Activated T-helper 1 cell treated with anti-CD3 and anti-CD28 coated beads, Interleukin-12 subunit alpha, Interleukin-12 subunit beta, Interleukin-2, Interleukin-4 antibody, amounts not matched to agents 30 ng/mL and 10 ng/mL and 1 ng/mL, durations not matched to agents 14 hours and 24 hours and 36 hours (primary cell): ENCODE measurements at regions of chr1 and their contacts with region 1.

Region 1: DNA sequence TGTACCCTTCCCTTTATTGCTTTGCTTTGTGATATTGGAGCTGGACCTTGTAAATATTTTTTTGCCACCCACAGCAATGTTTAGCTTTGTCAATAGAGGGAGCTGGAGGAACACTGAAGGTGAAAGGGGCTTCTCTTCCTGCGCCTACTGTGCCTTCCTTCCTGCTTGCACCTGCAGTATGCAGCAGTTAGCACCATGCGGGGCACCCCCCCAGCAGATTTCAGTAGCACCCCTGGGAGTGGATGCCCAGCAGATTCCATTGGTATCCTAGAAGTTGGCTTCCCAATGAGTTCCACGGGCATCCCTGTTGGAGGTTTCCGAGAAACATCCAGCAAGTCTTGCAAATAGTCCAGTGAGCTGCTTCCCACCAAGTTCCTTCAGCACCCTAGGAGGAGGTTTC is 25.6 kb downstream of the S100A10 start:
- DNase-seq: peak; percentile 45
- H3K4me3 Mint-ChIP-seq: no peak overlapping the region
- H3K27ac Mint-ChIP-seq: no peak overlapping the region
- H3K4me1 Mint-ChIP-seq: peaks cover 35% of the 10 kb centered on the region
- H3K27me3 Mint-ChIP-seq: peaks cover 9% of the 10 kb centered on the region

Region 2: DNA sequence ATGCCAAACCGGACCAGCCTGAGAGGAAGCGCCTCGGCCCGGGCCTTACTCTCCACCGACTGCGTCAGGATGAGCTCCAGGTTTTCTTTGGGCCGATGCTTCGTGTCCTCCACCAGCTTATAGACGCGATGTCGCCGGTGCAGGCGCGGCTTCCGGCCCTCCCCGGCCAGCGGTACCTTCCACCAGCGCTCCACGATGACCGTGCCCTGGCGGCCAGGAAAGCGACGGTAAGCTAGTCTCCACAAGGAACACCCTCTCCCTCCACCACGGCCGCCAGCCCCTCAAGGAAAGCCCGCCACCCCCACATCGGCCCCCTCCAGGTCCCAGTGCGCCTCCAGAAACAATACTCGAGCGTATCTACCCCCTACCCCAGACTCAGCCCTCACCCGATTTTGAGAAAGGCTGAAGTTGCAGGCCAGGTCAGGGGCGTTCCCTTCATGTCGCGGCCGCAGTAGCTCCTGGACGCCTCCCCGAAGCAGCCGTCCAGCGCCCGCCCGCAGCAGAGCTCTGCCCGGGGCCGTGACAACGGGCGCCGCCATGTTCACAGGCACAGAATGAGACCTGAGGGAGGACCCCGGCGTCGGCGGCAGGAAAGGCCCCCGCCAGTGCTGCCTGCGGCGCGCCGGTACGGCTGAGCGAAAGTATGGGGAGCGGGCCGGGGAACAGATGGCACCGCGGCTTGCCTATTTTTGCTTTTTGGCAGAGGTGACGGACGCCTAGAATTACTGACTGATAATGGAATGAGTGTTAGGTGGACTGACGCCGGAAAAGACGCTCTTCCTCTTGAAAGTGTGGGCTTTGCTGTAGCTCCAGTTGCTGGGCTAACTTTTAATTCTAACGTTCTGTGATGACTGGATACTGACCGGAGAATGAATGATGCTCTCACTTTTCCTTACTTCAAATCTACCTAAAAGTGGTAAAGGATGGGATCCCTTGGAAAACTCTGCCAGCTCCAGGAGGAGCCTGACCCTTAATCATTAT is 204.8 kb before region 1 on chr1 and contains the start of gene MRPL9:
- intact Hi-C with region 1: no loop called
- DNase-seq: peak; percentile 84
- H3K4me3 Mint-ChIP-seq: peak within 1 kb of the TSS; percentile 89
- H3K27ac Mint-ChIP-seq: peak within 1 kb of the TSS; percentile 96
- H3K4me1 Mint-ChIP-seq: peaks cover 35% of the 10 kb centered on the region
- H3K27me3 Mint-ChIP-seq: no peaks in the 10 kb centered on the region
- total RNA-seq, gene MRPL9: 136 and 141 TPM in 2 replicates

Region 3: DNA sequence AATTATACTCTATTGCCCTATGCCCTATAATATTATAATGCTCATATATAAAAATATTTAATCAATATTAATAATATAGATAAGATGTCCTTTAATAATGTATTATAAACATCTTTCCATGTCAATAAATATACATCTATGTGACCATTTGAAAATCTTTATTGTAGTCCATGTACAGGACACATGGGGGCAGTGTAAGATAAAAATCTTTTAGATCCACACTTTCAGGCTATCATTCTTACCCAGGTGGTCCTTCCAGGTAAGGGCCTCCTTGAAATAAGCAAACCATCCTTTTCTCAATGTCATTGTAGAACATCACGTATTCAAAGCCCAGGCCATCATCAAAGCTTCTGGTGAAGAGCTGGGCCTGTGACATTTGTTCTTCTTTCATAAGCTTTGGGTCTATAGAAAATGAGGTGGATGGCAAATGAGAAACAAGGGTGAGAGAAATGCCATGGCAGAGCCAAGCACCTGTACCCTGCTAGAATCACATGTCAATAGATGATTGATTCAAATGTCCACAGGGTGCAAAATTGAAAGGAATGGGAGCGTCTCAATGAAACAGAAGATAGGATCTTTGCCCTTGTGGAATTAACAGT is 79.0 kb before region 1 on chr1:
- intact Hi-C with region 1: loop called (anchors 1 kb)
- DNase-seq: no peak
- H3K4me3 Mint-ChIP-seq: no peak overlapping the region
- H3K27ac Mint-ChIP-seq: no peak overlapping the region
- H3K4me1 Mint-ChIP-seq: peaks cover 30% of the 10 kb centered on the region
- H3K27me3 Mint-ChIP-seq: no peaks in the 10 kb centered on the region

Region 4: GRCh38 chr1:151945725-151946364 is 22.2 kb before region 1 on chr1:
- intact Hi-C with region 1: loop called (anchors 1 kb)
- DNase-seq: peak; percentile 77
- H3K4me3 Mint-ChIP-seq: peak overlapping the region; percentile 58
- H3K27ac Mint-ChIP-seq: peak overlapping the region; percentile 88
- H3K4me1 Mint-ChIP-seq: peaks cover 50% of the 10 kb centered on the region
- H3K27me3 Mint-ChIP-seq: peaks cover 1% of the 10 kb centered on the region

Region 5: GRCh38 chr1:151993654-151994496 is 25.8 kb after region 1 on chr1 and contains the start of gene S100A10:
- intact Hi-C with region 1: loop called (anchors 1 kb)
- DNase-seq: peak; percentile 77
- H3K4me3 Mint-ChIP-seq: peak within 1 kb of the TSS; percentile 98
- H3K27ac Mint-ChIP-seq: peak within 1 kb of the TSS; percentile 98
- H3K4me1 Mint-ChIP-seq: peaks cover 49% of the 10 kb centered on the region
- H3K27me3 Mint-ChIP-seq: peaks cover 1% of the 10 kb centered on the region
- total RNA-seq, gene S100A10: 105 and 106 TPM in 2 replicates

Region 6: GRCh38 chr1:152013664-152014237 is 45.7 kb after region 1 on chr1:
- intact Hi-C with region 1: loop called (anchors 1 kb)
- DNase-seq: peak; percentile 42
- H3K4me3 Mint-ChIP-seq: no peak overlapping the region
- H3K27ac Mint-ChIP-seq: no peak overlapping the region
- H3K4me1 Mint-ChIP-seq: peaks cover 7% of the 10 kb centered on the region
- H3K27me3 Mint-ChIP-seq: peaks cover 26% of the 10 kb centered on the region

Region 7: GRCh38 chr1:152189657-152190442 is 221.8 kb after region 1 on chr1:
- intact Hi-C with region 1: loop called (anchors 2 kb)
- DNase-seq: peak; percentile 41
- H3K4me3 Mint-ChIP-seq: peak overlapping the region; percentile 68
- H3K27ac Mint-ChIP-seq: peak overlapping the region; percentile 56
- H3K4me1 Mint-ChIP-seq: peaks cover 6% of the 10 kb centered on the region
- H3K27me3 Mint-ChIP-seq: peaks cover 27% of the 10 kb centered on the region